ENCODE measurements at regions of chr9 and their contacts with region 1.

Region 1: GRCh38 chr9:99104459-99105151 is at the start of gene TGFBR1:
- DNase-seq: peak; percentile 95
- ATAC-seq: peak; percentile 88
- H3K4me3 Mint-ChIP-seq: peak within 1 kb of the TSS; percentile 92
- H3K27ac Mint-ChIP-seq: peak within 1 kb of the TSS; percentile 88
- H3K4me1 Mint-ChIP-seq: peaks cover 68% of the 10 kb centered on the region
- H3K27me3 Mint-ChIP-seq: no peaks in the 10 kb centered on the region
- total RNA-seq, gene TGFBR1: 72.5 to 78.0 TPM

Region 2: GRCh38 chr9:98899408-98900056 is 205.1 kb before region 1 on chr9:
- CTCF ChIA-PET with region 1: no interaction called
- DNase-seq: no peak
- ATAC-seq: no peak
- H3K4me3 Mint-ChIP-seq: no peak overlapping the region
- H3K27ac Mint-ChIP-seq: no peak overlapping the region
- H3K4me1 Mint-ChIP-seq: peaks cover 4% of the 10 kb centered on the region
- H3K27me3 Mint-ChIP-seq: peaks cover 43% of the 10 kb centered on the region

Region 3: GRCh38 chr9:98971168-98971914 is 133.3 kb before region 1 on chr9:
- CTCF ChIA-PET with region 1: no interaction called
- DNase-seq: no peak
- ATAC-seq: no peak
- H3K4me3 Mint-ChIP-seq: no peak overlapping the region
- H3K27ac Mint-ChIP-seq: no peak overlapping the region
- H3K4me1 Mint-ChIP-seq: peaks cover 7% of the 10 kb centered on the region
- H3K27me3 Mint-ChIP-seq: peaks cover 22% of the 10 kb centered on the region

Region 4: GRCh38 chr9:99012942-99013512 is 91.6 kb before region 1 on chr9:
- CTCF ChIA-PET with region 1: interaction called, 10 read pairs
- DNase-seq: no peak
- ATAC-seq: peak; percentile 46
- H3K4me3 Mint-ChIP-seq: peak overlapping the region; percentile 58
- H3K27ac Mint-ChIP-seq: peak overlapping the region; percentile 98
- H3K4me1 Mint-ChIP-seq: peaks cover 21% of the 10 kb centered on the region
- H3K27me3 Mint-ChIP-seq: no peaks in the 10 kb centered on the region

Region 5: GRCh38 chr9:99057665-99058625 is 46.7 kb before region 1 on chr9:
- CTCF ChIA-PET with region 1: interaction called, 35 read pairs
- DNase-seq: peak; percentile 97
- ATAC-seq: peak; percentile 65
- H3K4me3 Mint-ChIP-seq: peak overlapping the region; percentile 73
- H3K27ac Mint-ChIP-seq: peak overlapping the region; percentile 92
- H3K4me1 Mint-ChIP-seq: peaks cover 73% of the 10 kb centered on the region
- H3K27me3 Mint-ChIP-seq: no peaks in the 10 kb centered on the region

Region 6: DNA sequence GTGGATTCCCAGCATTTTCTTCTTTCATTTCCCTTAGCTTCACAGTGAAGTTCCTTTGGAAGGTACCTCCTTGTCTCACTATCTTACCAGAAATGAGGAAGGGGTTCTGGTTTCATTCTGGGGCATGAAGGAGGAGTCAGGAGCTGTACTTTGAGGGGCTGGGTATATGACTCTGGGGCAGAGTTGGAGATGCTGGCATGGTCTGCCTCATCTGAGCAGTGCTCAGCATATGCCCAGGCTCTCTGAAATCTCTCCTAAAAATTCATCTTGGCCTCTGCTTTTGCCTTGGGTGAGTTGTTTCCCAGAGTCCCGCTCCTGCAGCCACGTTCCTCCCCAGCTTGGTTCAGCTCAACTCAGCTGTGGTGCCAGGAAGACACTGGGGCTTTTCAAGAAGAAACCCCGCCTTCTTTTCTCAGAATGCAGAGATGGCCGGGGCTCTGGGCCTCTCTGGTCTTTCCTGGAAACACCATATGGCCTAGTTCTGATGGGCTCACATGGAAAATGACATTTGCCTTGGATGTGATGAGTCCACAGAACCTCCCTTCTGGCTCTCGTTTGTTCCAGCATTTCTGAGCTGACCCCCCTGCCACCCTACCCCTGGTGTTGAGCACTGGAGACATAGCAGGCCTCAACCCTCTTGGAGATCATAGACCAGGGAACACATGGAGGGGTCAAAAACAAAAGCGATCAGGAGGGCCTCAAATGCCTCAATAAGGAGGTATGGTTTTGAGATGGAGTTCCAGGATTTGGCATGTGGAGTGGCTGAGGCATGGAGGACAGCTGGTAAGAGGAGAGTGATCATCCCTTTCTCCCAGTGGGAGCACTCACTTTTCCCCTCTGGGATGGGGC is 11.7 kb before region 1 on chr9:
- CTCF ChIA-PET with region 1: interaction called, 43 read pairs
- DNase-seq: peak; percentile 91
- ATAC-seq: peak; percentile 89
- H3K4me3 Mint-ChIP-seq: peak overlapping the region; percentile 57
- H3K27ac Mint-ChIP-seq: peak overlapping the region; percentile 99
- H3K4me1 Mint-ChIP-seq: peaks cover 69% of the 10 kb centered on the region
- H3K27me3 Mint-ChIP-seq: no peaks in the 10 kb centered on the region

Region 7: GRCh38 chr9:99118782-99119466 is 14.3 kb after region 1 on chr9:
- CTCF ChIA-PET with region 1: interaction called, 15 read pairs
- DNase-seq: peak; percentile 86
- ATAC-seq: peak; percentile 99
- H3K4me3 Mint-ChIP-seq: peak overlapping the region; percentile 67
- H3K27ac Mint-ChIP-seq: peak overlapping the region; percentile 95
- H3K4me1 Mint-ChIP-seq: peaks cover 77% of the 10 kb centered on the region
- H3K27me3 Mint-ChIP-seq: no peaks in the 10 kb centered on the region